K562 (cell line): ENCODE measurements at regions of chr1 and their contacts with region 1.

Region 1: GRCh38 chr1:237386362-237387143 is 344.6 kb downstream of the RYR2 start:
- DNase-seq: peak; percentile 20 to 37 (median 30)
- ATAC-seq: peak; percentile 71
- H3K4me3 ChIP-seq: no peak overlapping the region
- H3K27ac ChIP-seq: no peak overlapping the region
- H3K4me1 ChIP-seq: no peaks in the 10 kb centered on the region
- H3K27me3 ChIP-seq: no peaks in the 10 kb centered on the region
- CTCF ChIP-seq: peak; percentile 42 to 76 (median 62); a peak in 5 of 6 replicates
- EP300 ChIP-seq: no peak
- POLR2A ChIP-seq: no peak
- RAD21 ChIP-seq: peak; percentile 86

Region 2: DNA sequence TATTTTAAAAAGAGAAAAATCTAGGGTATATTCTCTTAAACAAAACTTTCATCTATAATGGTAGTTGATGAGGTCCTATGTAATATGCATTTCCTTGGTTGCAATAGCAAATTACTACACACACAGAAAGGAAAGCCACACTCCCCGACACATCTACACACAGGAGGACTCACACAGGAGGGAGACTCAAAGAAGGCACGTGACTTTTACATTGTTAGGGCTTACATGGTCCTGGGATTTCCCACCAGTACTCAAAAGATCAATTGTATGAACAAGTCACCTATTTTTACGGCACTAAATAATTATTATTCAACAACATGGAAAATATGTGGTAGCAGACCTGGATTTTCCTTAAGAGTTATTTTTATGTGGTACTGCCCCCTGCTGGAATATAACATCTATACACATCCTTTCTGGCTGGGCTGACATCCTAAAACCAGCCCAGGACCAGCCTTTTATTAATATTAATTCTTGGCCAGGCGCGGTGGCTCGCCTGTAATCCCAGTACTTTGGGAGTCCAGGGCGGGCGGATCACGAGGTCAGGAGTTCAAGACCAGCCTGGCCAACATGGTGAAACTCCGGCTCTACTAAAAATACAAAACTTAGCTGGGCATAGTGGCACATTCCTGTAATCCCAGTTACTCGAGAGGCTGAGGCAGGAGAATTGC is 896.7 kb before region 1 on chr1:
- CTCF ChIA-PET with region 1: no interaction called
- POLR2A ChIA-PET with region 1: no interaction called
- in situ Hi-C with region 1: loop called (anchors 25 kb)
- intact Hi-C with region 1: no loop called
- DNase-seq: peak; percentile 62 to 77 (median 64)
- ATAC-seq: peak; percentile 85
- H3K4me3 ChIP-seq: no peak overlapping the region
- H3K27ac ChIP-seq: no peak overlapping the region
- H3K4me1 ChIP-seq: peaks cover 0 to 6% of the 10 kb centered on the region in 2 experiments; a peak in 3 of 5 replicates
- H3K27me3 ChIP-seq: peaks cover 9 to 15% of the 10 kb centered on the region in 2 experiments; a peak in 4 of 5 replicates
- CTCF ChIP-seq: peak; percentile 54 to 74 (median 70)
- EP300 ChIP-seq: no peak
- POLR2A ChIP-seq: no peak
- RAD21 ChIP-seq: peak; percentile 78 to 88

Region 3: GRCh38 chr1:236590553-236591150 is 795.9 kb before region 1 on chr1:
- CTCF ChIA-PET with region 1: no interaction called
- POLR2A ChIA-PET with region 1: no interaction called
- in situ Hi-C with region 1: no loop called
- intact Hi-C with region 1: no loop called
- DNase-seq: no peak
- ATAC-seq: no peak
- H3K4me3 ChIP-seq: no peak overlapping the region
- H3K27ac ChIP-seq: no peak overlapping the region
- H3K4me1 ChIP-seq: no peaks in the 10 kb centered on the region
- H3K27me3 ChIP-seq: no peaks in the 10 kb centered on the region
- CTCF ChIP-seq: no peak
- EP300 ChIP-seq: no peak
- POLR2A ChIP-seq: no peak
- RAD21 ChIP-seq: no peak

Region 4: GRCh38 chr1:236639686-236640085 is 746.9 kb before region 1 on chr1:
- CTCF ChIA-PET with region 1: no interaction called
- POLR2A ChIA-PET with region 1: no interaction called
- in situ Hi-C with region 1: loop called (anchors 10 kb)
- intact Hi-C with region 1: no loop called
- DNase-seq: no peak
- ATAC-seq: no peak
- H3K4me3 ChIP-seq: no peak overlapping the region
- H3K27ac ChIP-seq: no peak overlapping the region
- H3K4me1 ChIP-seq: peaks cover 0 to 5% of the 10 kb centered on the region in 2 experiments; a peak in 2 of 5 replicates
- H3K27me3 ChIP-seq: peaks cover 32 to 43% of the 10 kb centered on the region in 2 experiments
- CTCF ChIP-seq: no peak
- EP300 ChIP-seq: no peak
- POLR2A ChIP-seq: no peak
- RAD21 ChIP-seq: no peak

Region 5: DNA sequence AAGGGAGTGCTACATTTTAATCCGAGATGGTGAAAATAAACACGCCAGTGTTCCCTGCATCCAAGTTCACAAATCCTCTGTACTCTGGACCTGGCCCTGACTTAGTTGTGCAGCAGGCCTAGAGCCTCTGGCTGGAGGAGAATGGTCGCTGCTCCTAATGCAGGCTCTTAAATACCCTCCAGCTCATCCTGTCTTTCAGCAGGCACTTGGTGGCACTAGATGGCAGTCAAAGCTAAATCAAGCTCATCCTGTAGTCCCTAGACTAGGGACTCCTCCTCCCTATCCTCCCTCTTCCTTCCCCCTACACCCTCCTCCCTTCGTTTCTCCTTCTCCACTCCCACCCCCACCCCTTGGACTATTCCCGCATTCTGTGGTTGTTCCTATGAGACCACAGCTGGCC is 633.0 kb before region 1 on chr1:
- CTCF ChIA-PET with region 1: no interaction called
- POLR2A ChIA-PET with region 1: no interaction called
- in situ Hi-C with region 1: loop called (anchors 25 kb)
- intact Hi-C with region 1: loop called (anchors 2 kb)
- DNase-seq: peak; percentile 33 to 64 (median 44)
- ATAC-seq: peak; percentile 93
- H3K4me3 ChIP-seq: no peak overlapping the region
- H3K27ac ChIP-seq: no peak overlapping the region
- H3K4me1 ChIP-seq: peaks cover 10 to 13% of the 10 kb centered on the region in 2 experiments
- H3K27me3 ChIP-seq: peaks cover 0 to 16% of the 10 kb centered on the region in 2 experiments; a peak in 4 of 5 replicates
- CTCF ChIP-seq: peak; percentile 62 to 71 (median 63)
- EP300 ChIP-seq: no peak
- POLR2A ChIP-seq: no peak
- RAD21 ChIP-seq: peak; percentile 68 to 76

Region 6: GRCh38 chr1:237562242-237562823 is 175.8 kb after region 1 on chr1:
- CTCF ChIA-PET with region 1: no interaction called
- POLR2A ChIA-PET with region 1: no interaction called
- in situ Hi-C with region 1: no loop called
- intact Hi-C with region 1: loop called (anchors 10 kb)
- DNase-seq: peak; percentile 35 to 75 (median 62)
- ATAC-seq: peak; percentile 93
- H3K4me3 ChIP-seq: no peak overlapping the region
- H3K27ac ChIP-seq: no peak overlapping the region
- H3K4me1 ChIP-seq: no peaks in the 10 kb centered on the region
- H3K27me3 ChIP-seq: no peaks in the 10 kb centered on the region
- CTCF ChIP-seq: peak; percentile 29 to 63 (median 58); a peak in 5 of 6 replicates
- EP300 ChIP-seq: no peak
- POLR2A ChIP-seq: no peak
- RAD21 ChIP-seq: peak; percentile 62 to 66